Activated CD4-positive, alpha-beta memory T cell treated with anti-CD3 and anti-CD28 coated beads for 36 hours (primary cell): ENCODE measurements at regions of chr3 and their contacts with region 1.

Region 1: DNA sequence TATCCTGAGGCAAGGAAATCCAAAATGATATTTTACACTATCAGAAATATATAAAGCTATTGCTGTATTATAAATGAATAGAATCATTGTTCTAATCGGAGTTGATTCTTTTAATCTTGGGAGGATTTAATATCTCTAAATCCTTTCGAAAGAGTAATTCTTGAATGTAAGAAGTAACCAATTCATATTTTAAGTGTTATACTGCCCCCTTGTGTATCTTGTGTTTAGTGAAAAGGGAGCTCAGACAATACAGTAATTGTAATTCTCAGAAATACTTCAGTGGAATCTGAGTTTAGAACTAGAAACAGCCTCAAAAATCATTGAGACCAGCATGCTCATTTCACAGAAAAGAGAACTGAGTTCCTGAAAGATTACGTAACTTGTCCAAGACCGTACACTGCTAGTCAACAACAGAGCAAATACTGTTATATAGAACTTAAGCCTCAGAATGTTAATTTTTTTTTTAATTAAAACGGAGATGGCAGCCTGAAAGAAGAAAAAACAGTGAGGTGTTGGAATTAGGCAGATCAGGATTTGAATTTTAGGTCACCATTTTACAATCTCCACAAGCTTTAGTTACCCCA is 42.9 kb downstream of the PLCH1 start:
- DNase-seq: no peak
- H3K4me3 Mint-ChIP-seq: no peak overlapping the region
- H3K27ac Mint-ChIP-seq: no peak overlapping the region
- H3K4me1 Mint-ChIP-seq: no peaks in the 10 kb centered on the region
- H3K27me3 Mint-ChIP-seq: peaks cover 2% of the 10 kb centered on the region

Region 2: DNA sequence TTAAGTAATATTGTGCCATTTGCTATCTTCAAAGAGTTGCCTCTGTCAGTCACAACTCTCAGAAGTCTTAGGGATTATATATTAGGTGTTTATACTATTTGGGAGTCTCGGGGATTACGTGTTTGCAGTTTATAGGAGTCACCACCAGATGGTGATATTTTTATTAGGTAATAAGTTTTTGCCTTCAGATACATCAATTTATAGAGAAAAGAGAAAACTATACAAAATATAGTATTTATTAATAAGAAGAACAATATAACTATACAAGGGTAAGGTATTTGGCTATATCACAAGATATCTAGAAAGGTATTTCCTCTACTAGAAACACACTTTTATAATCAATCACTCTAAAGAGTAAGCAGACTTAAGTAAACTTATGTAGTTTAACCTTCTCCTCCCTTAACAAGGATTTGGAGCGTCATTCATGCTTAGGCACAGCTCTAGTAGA is 1367.0 kb before region 1 on chr3:
- CTCF ChIA-PET with region 1: interaction called, 5 read pairs
- POLR2A ChIA-PET with region 1: no interaction called
- intact Hi-C with region 1: loop called (anchors 5 kb)
- DNase-seq: no peak
- H3K4me3 Mint-ChIP-seq: no peak overlapping the region
- H3K27ac Mint-ChIP-seq: no peak overlapping the region
- H3K4me1 Mint-ChIP-seq: no peaks in the 10 kb centered on the region
- H3K27me3 Mint-ChIP-seq: peaks cover 8% of the 10 kb centered on the region

Region 3: DNA sequence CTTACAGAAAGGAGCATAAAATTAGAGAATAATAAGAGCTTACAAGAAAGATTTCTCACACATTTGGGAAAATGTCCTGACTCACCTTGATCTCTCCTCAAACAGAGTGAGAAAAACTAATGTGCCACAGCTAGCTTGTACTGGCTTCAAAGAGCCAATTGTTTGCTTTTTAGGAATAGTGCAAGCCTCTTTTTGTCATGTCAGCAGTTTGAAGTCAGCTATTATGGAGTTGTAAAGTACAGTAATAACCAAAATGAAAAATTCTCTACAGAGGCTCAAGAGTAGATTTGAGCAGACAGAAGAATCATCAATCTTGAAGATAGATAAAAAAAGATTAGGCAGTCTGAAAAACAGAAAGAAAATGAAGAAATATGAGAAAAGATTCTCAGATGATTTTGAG is 958.6 kb before region 1 on chr3:
- CTCF ChIA-PET with region 1: no interaction called
- POLR2A ChIA-PET with region 1: no interaction called
- intact Hi-C with region 1: no loop called
- DNase-seq: no peak
- H3K4me3 Mint-ChIP-seq: no peak overlapping the region
- H3K27ac Mint-ChIP-seq: no peak overlapping the region
- H3K4me1 Mint-ChIP-seq: no peaks in the 10 kb centered on the region
- H3K27me3 Mint-ChIP-seq: no peaks in the 10 kb centered on the region

Region 4: DNA sequence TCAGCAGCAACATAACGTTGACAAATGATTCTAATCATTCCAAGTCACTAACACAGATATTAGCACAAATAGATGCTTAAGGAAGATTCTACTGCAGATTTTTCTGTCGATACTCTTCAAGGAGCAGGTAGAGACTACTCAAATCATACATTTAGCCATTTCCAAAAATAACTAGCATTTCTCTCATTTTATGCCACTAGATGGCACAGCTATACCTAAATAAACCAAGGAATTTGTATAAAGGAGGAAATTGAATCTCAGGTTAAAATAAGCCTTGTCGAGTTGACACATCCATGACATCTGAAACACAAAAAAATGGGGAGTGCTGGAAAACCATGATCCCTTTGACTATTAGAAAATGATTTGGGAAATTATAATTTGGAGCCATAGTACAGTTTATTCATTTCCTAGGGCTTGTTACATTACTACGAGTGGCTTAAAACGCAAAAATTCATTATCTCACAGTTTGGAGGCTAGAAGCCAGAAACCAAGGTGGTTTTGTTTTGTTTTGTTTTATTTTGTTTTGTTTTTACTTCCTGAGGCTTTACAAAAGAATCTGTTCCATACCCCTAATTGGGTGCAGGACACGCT is 349.0 kb before region 1 on chr3:
- CTCF ChIA-PET with region 1: interaction called, 43 read pairs
- POLR2A ChIA-PET with region 1: no interaction called
- intact Hi-C with region 1: loop called (anchors 1 kb)
- DNase-seq: no peak
- H3K4me3 Mint-ChIP-seq: no peak overlapping the region
- H3K27ac Mint-ChIP-seq: no peak overlapping the region
- H3K4me1 Mint-ChIP-seq: no peaks in the 10 kb centered on the region
- H3K27me3 Mint-ChIP-seq: peaks cover 7% of the 10 kb centered on the region

Region 5: DNA sequence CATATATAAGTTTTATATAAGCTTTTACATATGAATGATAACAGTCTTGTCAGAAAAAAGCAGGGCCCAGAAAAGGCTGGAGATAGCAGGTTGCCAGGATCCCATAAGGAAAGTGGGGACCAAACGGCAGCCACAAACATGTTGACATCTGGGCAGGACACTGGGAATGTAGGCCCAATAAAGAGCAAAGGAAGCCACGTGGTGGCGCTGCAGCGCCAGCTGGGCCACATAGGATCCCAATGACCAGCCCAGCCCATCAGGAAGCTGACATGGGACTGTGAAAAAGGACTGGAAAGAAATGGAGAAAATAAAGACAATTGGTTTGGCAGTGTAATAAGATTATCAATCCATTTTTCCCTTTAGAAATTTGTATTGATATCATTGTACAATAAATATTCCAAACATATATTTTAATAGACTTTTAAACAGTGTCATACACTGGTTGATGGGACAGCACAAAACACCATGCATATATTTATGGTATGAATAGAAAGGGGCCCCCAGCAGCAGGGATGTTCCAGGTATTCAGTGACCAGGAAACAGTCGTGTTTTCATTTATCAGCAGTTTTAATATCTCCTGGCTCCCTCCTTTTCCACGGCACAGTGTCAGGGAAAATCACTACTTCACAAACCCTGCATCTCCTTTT is 319.5 kb before region 1 on chr3:
- CTCF ChIA-PET with region 1: interaction called, 3 read pairs
- POLR2A ChIA-PET with region 1: no interaction called
- intact Hi-C with region 1: loop called (anchors 1 kb)
- DNase-seq: peak; percentile 15
- H3K4me3 Mint-ChIP-seq: no peak overlapping the region
- H3K27ac Mint-ChIP-seq: no peak overlapping the region
- H3K4me1 Mint-ChIP-seq: no peaks in the 10 kb centered on the region
- H3K27me3 Mint-ChIP-seq: peaks cover 1% of the 10 kb centered on the region

Region 6: GRCh38 chr3:155664925-155665695 is 36.9 kb before region 1 on chr3:
- CTCF ChIA-PET with region 1: no interaction called
- POLR2A ChIA-PET with region 1: no interaction called
- intact Hi-C with region 1: loop called (anchors 1 kb)
- DNase-seq: no peak
- H3K4me3 Mint-ChIP-seq: no peak overlapping the region
- H3K27ac Mint-ChIP-seq: no peak overlapping the region
- H3K4me1 Mint-ChIP-seq: no peaks in the 10 kb centered on the region
- H3K27me3 Mint-ChIP-seq: peaks cover 2% of the 10 kb centered on the region

Region 7: GRCh38 chr3:155682426-155683343 is 19.3 kb before region 1 on chr3:
- CTCF ChIA-PET with region 1: interaction called, 13 read pairs
- POLR2A ChIA-PET with region 1: no interaction called
- intact Hi-C with region 1: no loop called
- DNase-seq: no peak
- H3K4me3 Mint-ChIP-seq: no peak overlapping the region
- H3K27ac Mint-ChIP-seq: no peak overlapping the region
- H3K4me1 Mint-ChIP-seq: no peaks in the 10 kb centered on the region
- H3K27me3 Mint-ChIP-seq: no peaks in the 10 kb centered on the region

Region 8: DNA sequence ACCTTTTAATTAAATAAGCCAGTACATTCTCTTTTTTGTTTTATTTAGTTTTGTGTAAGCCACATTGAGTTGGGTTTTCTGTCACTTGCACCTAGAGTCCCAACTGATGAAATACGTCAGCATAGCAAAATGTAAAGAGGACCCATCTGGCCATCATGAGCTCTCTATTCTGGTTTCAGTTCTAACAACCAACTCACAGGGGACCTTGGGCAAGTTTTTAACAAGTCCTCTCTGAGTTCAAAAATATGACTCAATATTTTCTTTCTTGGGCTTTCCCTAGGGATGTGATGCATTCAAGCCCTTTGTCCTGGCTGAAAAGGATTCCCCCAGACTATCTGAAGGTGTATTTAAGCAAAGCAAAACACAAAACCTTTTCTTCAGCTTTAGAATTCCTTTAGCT is 10.0 kb after region 1 on chr3:
- CTCF ChIA-PET with region 1: interaction called, 13 read pairs
- POLR2A ChIA-PET with region 1: no interaction called
- intact Hi-C with region 1: no loop called
- DNase-seq: no peak
- H3K4me3 Mint-ChIP-seq: no peak overlapping the region
- H3K27ac Mint-ChIP-seq: no peak overlapping the region
- H3K4me1 Mint-ChIP-seq: no peaks in the 10 kb centered on the region
- H3K27me3 Mint-ChIP-seq: no peaks in the 10 kb centered on the region

Region 9: DNA sequence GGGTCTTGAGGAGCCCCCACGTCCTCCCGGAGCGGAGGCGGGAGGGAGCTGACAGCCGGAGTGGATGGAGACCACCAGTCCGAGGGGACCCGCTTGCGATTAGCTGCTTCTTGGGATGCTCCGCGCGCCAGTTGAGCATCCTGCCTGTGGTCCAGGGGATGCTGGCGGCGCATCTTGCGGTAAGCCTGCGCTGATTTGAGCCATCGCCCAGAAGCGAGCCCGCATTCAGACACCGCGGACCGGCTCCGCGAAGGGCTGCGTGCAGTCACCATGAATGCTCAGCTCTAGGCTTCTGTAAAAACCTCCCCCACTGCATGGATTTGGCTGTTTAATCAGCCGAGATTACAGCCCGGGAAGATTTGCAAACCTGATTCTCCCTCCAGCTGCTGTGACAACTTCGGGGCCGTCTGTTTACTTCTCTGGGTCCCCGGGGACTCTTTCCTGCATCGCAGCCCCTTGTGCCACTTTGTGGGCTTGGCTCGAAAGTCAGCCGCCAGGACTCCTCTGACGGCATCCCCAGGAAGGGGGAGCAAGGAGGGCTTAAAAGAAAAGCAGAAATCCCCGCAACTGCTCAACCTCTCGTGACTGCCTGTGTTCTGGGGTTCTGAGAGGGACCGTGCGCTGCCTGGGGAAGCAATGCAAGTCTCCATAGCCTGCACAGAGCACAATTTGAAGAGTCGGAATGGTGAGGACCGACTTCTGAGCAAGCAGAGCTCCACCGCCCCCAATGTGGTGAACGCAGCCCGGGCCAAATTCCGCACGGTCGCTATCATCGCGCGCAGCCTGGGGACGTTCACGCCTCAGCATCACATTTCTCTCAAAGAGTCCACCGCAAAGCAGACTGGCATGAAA is 589.5 kb after region 1 on chr3:
- CTCF ChIA-PET with region 1: no interaction called
- POLR2A ChIA-PET with region 1: no interaction called
- intact Hi-C with region 1: no loop called
- DNase-seq: no peak
- H3K4me3 Mint-ChIP-seq: no peak overlapping the region
- H3K27ac Mint-ChIP-seq: no peak overlapping the region
- H3K4me1 Mint-ChIP-seq: peaks cover 8% of the 10 kb centered on the region
- H3K27me3 Mint-ChIP-seq: peaks cover 45% of the 10 kb centered on the region